B cell (primary cell): ENCODE measurements at regions of chrX and their contacts with region 1.

Region 1: DNA sequence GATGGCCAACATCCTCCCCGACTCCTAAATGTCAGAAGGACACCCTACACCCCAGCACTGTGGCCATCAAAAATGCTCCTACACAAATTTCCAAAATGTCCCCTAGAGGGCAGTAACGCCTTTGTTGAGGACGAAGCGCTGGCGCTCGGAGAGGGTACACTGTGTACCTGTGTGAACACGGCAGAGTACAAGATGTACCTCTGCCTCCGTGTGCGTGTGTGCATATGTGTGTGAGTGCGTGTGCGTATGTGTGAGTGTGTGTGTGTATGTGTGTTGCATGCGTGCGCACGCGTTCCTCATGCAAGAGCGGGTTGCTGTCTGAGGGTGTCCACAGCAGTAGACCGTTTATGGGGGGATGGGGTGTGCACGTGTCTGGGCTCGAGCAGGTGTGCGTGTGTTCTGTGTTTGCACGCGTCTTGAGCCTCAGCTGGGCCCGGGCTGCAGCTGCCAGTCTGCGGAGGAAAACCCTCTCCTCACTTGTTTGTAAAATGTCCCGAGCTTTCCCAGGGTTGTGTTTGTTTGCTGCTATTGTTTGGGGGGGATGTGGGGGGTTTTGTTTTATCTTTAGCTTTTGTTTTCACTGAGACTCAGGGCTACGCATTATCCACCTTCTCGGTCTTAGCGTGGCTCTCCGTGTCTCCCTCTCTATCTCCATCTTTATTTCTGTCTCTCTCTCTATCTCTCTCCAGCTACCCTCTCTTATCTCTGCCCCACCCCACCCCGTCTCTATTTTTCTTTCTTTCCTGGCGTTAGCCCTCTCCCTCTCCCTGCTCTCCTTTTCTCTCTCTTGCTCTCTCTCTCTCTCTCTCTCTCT is 10.4 kb upstream of the TSPYL2 start:
- DNase-seq: peak; percentile 86
- ATAC-seq: peak; percentile 85
- H3K4me3 ChIP-seq: peak overlapping the region in 4 of 5 experiments; percentile 52 to 60 (median 56)
- H3K4me3 Mint-ChIP-seq: peak overlapping the region; percentile 89
- H3K27ac ChIP-seq: peak overlapping the region; percentile 74 to 84
- H3K27ac Mint-ChIP-seq: peak overlapping the region; percentile 96
- H3K4me1 ChIP-seq: peaks cover 9 to 12% of the 10 kb centered on the region in 2 donors
- H3K4me1 Mint-ChIP-seq: peaks cover 13% of the 10 kb centered on the region
- H3K27me3 ChIP-seq: no peaks in the 10 kb centered on the region
- H3K27me3 Mint-ChIP-seq: no peaks in the 10 kb centered on the region
- CTCF ChIP-seq: peak; percentile 69

Region 2: GRCh38 chrX:53081925-53082772 is 10.3 kb after region 1 on chrX and contains the start of gene TSPYL2:
- CTCF ChIA-PET with region 1: interaction called, 39 read pairs
- POLR2A ChIA-PET with region 1: interaction called, 30 read pairs
- intact Hi-C with region 1: loop called (anchors 1 kb)
- DNase-seq: peak; percentile 95
- ATAC-seq: peak; percentile 88
- H3K4me3 ChIP-seq: peak within 1 kb of the TSS; percentile 61 to 69 (median 65)
- H3K4me3 Mint-ChIP-seq: peak within 1 kb of the TSS; percentile 90
- H3K27ac ChIP-seq: peak within 1 kb of the TSS; percentile 85
- H3K27ac Mint-ChIP-seq: peak within 1 kb of the TSS; percentile 96
- H3K4me1 ChIP-seq: peaks cover 9 to 17% of the 10 kb centered on the region in 2 donors
- H3K4me1 Mint-ChIP-seq: peaks cover 31% of the 10 kb centered on the region
- H3K27me3 ChIP-seq: no peaks in the 10 kb centered on the region
- H3K27me3 Mint-ChIP-seq: no peaks in the 10 kb centered on the region
- CTCF ChIP-seq: no peak
- total RNA-seq, gene TSPYL2: 112 and 126 TPM in 2 replicates

Region 3: GRCh38 chrX:53088136-53088974 is 16.5 kb after region 1 on chrX:
- CTCF ChIA-PET with region 1: interaction called, 39 read pairs
- POLR2A ChIA-PET with region 1: interaction called, 3 read pairs
- intact Hi-C with region 1: loop called (anchors 1 kb)
- DNase-seq: peak; percentile 82
- ATAC-seq: peak; percentile 72
- H3K4me3 ChIP-seq: peak overlapping the region; percentile 39 to 61 (median 59)
- H3K4me3 Mint-ChIP-seq: peak overlapping the region; percentile 92
- H3K27ac ChIP-seq: peak overlapping the region; percentile 72 to 82
- H3K27ac Mint-ChIP-seq: peak overlapping the region; percentile 94
- H3K4me1 ChIP-seq: peaks cover 4 to 21% of the 10 kb centered on the region in 2 donors
- H3K4me1 Mint-ChIP-seq: peaks cover 34% of the 10 kb centered on the region
- H3K27me3 ChIP-seq: no peaks in the 10 kb centered on the region
- H3K27me3 Mint-ChIP-seq: no peaks in the 10 kb centered on the region
- CTCF ChIP-seq: no peak

Region 4: GRCh38 chrX:53093748-53094583 is 22.2 kb after region 1 on chrX and contains the start of gene KANTR:
- CTCF ChIA-PET with region 1: interaction called, 39 read pairs
- POLR2A ChIA-PET with region 1: no interaction called
- intact Hi-C with region 1: loop called (anchors 1 kb)
- DNase-seq: peak; percentile 88
- ATAC-seq: peak; percentile 82
- H3K4me3 ChIP-seq: peak within 1 kb of the TSS; percentile 51 to 72 (median 68)
- H3K4me3 Mint-ChIP-seq: peak within 1 kb of the TSS; percentile 91
- H3K27ac ChIP-seq: peak within 1 kb of the TSS; percentile 49 to 59
- H3K27ac Mint-ChIP-seq: peak within 1 kb of the TSS; percentile 91
- H3K4me1 ChIP-seq: peaks cover 6 to 15% of the 10 kb centered on the region in 2 donors
- H3K4me1 Mint-ChIP-seq: peaks cover 16% of the 10 kb centered on the region
- H3K27me3 ChIP-seq: no peaks in the 10 kb centered on the region
- H3K27me3 Mint-ChIP-seq: no peaks in the 10 kb centered on the region
- CTCF ChIP-seq: no peak
- total RNA-seq, gene KANTR: 26.8 and 32.6 TPM in 2 replicates

Region 5: DNA sequence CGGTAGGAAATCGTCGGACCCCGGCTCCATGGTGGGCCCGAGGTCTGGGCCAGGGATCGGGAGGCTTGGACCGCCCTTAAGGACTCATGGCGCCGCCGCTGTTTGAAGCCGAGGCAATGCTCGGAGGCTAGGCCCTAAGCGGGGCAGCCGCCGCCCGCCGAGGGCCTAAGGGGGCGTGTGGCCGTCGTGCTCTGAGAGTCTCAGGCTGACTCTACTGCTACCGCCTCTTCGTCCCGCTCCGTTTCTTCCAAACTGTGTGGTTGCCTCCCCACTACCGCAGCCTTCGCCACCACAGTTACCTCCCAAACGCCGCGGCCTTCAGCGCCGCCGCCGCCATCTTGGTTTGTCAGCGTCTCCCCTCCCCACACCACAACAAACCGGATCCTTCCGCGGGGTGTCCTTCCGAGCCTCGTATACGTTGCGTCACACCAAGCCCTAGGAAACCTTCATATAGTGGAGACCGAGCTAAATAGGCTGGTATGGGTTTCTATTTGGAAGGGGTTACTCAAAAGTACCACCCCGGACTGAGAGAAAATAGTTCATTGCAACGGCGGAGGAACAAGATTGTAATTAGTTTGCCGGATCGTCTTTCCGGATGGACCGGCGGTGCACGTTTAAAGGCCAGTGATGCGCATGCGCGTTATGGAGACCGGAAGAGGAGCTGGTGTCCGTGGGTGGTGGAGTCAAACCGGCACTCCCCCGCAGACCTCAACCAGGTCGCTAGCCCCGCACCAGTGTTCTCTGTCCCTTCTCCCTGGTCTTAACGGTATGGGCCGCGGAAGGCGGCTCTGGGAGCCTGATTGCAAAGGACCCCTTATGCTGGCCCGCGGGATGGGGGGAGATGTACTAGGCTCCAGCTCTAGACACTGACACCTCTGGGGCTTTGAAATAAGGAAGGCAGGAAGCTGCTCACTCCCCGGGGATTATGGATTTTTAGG is 153.3 kb after region 1 on chrX and contains the start of gene KDM5C:
- CTCF ChIA-PET with region 1: no interaction called
- POLR2A ChIA-PET with region 1: no interaction called
- intact Hi-C with region 1: loop called (anchors 10 kb)
- DNase-seq: peak; percentile 93
- ATAC-seq: peak; percentile 88
- H3K4me3 ChIP-seq: peak within 1 kb of the TSS; percentile 65 to 100 (median 96)
- H3K4me3 Mint-ChIP-seq: peak within 1 kb of the TSS; percentile 96
- H3K27ac ChIP-seq: peak within 1 kb of the TSS; percentile 86 to 97
- H3K27ac Mint-ChIP-seq: peak within 1 kb of the TSS; percentile 98
- H3K4me1 ChIP-seq: peaks cover 31 to 34% of the 10 kb centered on the region in 2 donors
- H3K4me1 Mint-ChIP-seq: peaks cover 32% of the 10 kb centered on the region
- H3K27me3 ChIP-seq: no peaks in the 10 kb centered on the region
- H3K27me3 Mint-ChIP-seq: no peaks in the 10 kb centered on the region
- CTCF ChIP-seq: no peak
- total RNA-seq, gene KDM5C: 138 and 157 TPM in 2 replicates